SK-N-SH (cell line): ENCODE measurements at regions of chr20 and their contacts with region 1.

Region 1: DNA sequence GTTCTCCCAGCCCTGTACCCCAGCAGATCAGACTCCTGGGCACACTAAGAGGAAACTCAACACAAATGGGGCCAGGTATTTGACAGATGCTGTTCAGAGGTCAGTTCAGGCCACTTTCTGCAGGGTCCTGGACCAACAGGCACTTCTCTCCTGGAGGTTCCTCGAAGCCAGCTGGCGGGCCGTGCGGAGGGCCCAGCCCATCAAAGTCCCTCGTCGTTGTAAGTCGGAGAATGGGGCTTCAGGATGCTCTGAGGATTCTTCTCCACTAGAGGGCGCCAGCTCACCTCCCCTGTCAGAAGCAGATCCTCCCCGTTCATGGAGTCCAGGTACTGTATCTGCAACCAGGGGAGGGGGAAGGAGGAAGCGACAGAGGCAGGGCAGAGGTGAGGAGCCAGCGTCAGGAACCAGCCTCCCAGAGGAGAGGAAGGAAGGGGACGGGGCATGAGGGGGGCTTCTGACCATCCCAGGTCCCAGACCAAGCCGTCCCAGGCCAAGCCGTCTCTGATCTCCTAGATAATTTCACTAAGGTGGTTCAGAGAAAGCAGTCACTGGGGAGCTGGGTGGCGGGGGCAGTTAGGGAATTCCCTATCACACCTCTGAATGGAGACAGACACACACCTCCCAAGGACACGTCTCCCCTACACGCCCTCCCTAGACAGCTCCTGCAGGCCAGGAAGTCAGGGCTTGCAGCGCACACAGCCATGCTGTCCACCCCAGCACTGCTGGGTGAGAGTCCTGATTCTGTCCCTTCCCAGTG is 11.7 kb upstream of the FAM83C start:
- DNase-seq: peak; percentile 87
- H3K4me3 ChIP-seq: no peak overlapping the region; a peak in 1 of 4 replicates
- H3K27ac ChIP-seq: peak overlapping the region; percentile 20 to 97; a peak in 3 of 4 replicates
- H3K4me1 ChIP-seq: peaks cover 30 to 57% of the 10 kb centered on the region in 2 experiments; a peak in 3 of 4 replicates
- H3K27me3 ChIP-seq: no peaks in the 10 kb centered on the region
- CTCF ChIP-seq: peak; percentile 89
- EP300 ChIP-seq: no peak; a peak in 1 of 4 replicates
- RAD21 ChIP-seq: peak; percentile 92

Region 2: GRCh38 chr20:35284267-35284991 is 19.5 kb before region 1 on chr20 and contains the start of gene EIF6:
- CTCF ChIA-PET with region 1: interaction called, 28 read pairs
- POLR2A ChIA-PET with region 1: interaction called, 3 read pairs
- DNase-seq: peak; percentile 96
- H3K4me3 ChIP-seq: peak within 1 kb of the TSS; percentile 71 to 80
- H3K27ac ChIP-seq: peak within 1 kb of the TSS; percentile 67 to 75
- H3K4me1 ChIP-seq: peaks cover 0 to 11% of the 10 kb centered on the region in 2 experiments; a peak in 3 of 4 replicates
- H3K27me3 ChIP-seq: no peaks in the 10 kb centered on the region
- CTCF ChIP-seq: no peak
- EP300 ChIP-seq: no peak
- RAD21 ChIP-seq: no peak
- polyA plus RNA-seq, gene EIF6: 343 and 356 TPM in 2 replicates

Region 3: DNA sequence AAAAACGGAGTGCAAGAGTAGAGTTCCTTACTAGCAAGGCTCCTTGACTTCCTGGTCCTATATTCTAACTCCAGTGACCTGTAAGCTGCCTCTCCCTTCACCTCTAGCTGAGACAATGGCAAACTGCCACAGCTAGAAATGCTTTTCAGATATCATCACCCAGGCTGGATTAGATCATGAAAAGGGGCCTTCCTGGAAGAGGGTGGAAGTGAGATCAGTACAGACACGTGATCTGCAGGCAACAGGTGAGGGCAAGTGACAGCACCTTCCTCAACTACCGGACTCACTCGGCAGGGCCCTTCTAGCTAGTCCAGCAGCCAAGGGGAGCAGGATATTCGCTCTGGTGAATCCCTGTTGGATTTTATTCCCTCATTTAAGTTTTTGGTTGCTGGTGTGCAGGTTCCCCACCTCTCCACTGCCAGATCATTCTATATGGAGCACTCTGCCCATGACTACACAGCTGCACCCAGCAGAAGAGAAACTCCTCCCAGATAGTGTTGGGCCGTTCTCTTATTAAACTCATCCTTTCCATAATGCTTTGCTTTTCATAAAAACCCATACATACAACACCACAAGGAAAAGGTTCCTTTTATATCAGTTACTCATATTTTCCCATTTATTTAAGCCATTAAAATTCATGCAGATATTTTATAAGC is 14.7 kb after region 1 on chr20:
- CTCF ChIA-PET with region 1: interaction called, 32 read pairs
- POLR2A ChIA-PET with region 1: no interaction called
- DNase-seq: no peak
- H3K4me3 ChIP-seq: no peak overlapping the region
- H3K27ac ChIP-seq: peak overlapping the region; percentile 80 to 92
- H3K4me1 ChIP-seq: peaks cover 10 to 36% of the 10 kb centered on the region in 2 experiments
- H3K27me3 ChIP-seq: no peaks in the 10 kb centered on the region
- CTCF ChIP-seq: no peak
- EP300 ChIP-seq: peak in 1 of 2 experiments; percentile 81; a peak in 1 of 4 replicates
- RAD21 ChIP-seq: no peak

Region 4: DNA sequence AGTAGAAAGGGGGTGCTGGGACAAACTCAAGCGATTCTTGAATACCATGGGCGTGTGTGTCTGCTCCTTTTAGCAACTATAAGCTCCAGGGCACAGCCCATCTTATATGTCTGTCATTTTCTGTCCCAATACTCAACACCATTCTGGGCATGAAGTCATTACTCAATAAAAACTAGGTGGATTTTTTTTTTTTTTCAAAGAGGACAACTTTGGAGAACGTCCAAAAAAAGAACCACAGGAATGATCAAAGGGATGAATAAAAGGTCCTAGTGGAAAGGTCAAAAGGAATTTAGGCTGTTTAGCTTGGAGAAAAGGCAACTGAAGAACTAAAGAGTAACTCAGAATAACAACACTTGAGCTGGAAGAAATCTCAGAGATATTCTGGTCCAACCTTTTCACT is 83.4 kb after region 1 on chr20:
- CTCF ChIA-PET with region 1: interaction called, 11 read pairs
- POLR2A ChIA-PET with region 1: no interaction called
- DNase-seq: no peak
- H3K4me3 ChIP-seq: no peak overlapping the region
- H3K27ac ChIP-seq: peak overlapping the region in 1 of 2 experiments; percentile 20; a peak in 2 of 4 replicates
- H3K4me1 ChIP-seq: no peaks in the 10 kb centered on the region
- H3K27me3 ChIP-seq: no peaks in the 10 kb centered on the region
- CTCF ChIP-seq: no peak
- EP300 ChIP-seq: no peak
- RAD21 ChIP-seq: no peak

Region 5: DNA sequence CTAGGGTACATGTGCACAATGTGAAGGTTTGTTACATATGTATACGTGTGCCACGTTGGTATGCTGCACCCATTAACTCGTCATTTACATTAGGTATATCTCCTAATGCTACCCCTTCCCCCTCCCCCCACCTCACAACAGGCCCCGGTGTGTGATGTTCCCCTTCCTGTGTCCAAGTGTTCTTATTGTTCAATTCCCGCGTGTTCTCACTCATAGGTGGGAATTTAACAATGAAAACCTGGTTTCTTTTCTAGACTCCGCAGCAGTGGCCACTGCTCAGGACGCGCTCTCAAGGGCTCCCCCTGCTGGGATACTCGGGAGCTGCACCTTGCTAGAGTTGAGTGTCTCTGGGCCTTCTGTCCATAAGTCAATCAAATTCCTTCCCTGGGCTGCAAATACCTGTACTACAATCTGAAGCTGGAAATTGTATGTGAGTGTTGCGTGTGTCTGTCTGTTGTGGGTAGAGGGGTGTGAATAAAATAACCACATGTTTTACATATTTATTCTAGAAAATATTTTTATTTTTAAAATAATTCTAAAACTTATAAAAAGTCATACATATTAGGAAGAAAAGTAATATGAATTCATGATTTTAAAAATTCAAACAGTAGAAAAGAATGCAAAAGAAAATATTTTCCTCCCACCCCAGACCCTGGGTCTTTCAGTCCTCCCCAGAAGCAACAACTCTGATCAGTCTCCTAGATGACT is 143.3 kb after region 1 on chr20:
- CTCF ChIA-PET with region 1: interaction called, 323 read pairs
- POLR2A ChIA-PET with region 1: no interaction called
- DNase-seq: peak; percentile 74
- H3K4me3 ChIP-seq: peak overlapping the region in 1 of 2 experiments; percentile 44; a peak in 1 of 4 replicates
- H3K27ac ChIP-seq: no peak overlapping the region
- H3K4me1 ChIP-seq: peaks cover 4 to 11% of the 10 kb centered on the region in 2 experiments; a peak in 3 of 4 replicates
- H3K27me3 ChIP-seq: no peaks in the 10 kb centered on the region
- CTCF ChIP-seq: peak; percentile 92
- EP300 ChIP-seq: no peak
- RAD21 ChIP-seq: peak; percentile 69